CD8-positive, alpha-beta memory T cell (primary cell): ENCODE measurements at regions of chr1 and their contacts with region 1.

Region 1: GRCh38 chr1:150186789-150187559 is 37.3 kb downstream of the PLEKHO1 start:
- DNase-seq: peak in 2 of 5 donors; percentile 45 to 59
- H3K4me3 ChIP-seq: no peak overlapping the region
- H3K4me3 Mint-ChIP-seq: peak overlapping the region in 5 of 7 donors; percentile 4 to 62 (median 33)
- H3K27ac ChIP-seq: no peak overlapping the region
- H3K27ac Mint-ChIP-seq: peak overlapping the region in 6 of 8 donors; percentile 35 to 72 (median 62)
- H3K4me1 ChIP-seq: no peaks in the 10 kb centered on the region
- H3K4me1 Mint-ChIP-seq: peaks cover 7 to 13% (median 10%) of the 10 kb centered on the region in 3 donors
- H3K27me3 ChIP-seq: no peaks in the 10 kb centered on the region
- H3K27me3 Mint-ChIP-seq: peaks cover 0 to 6% of the 10 kb centered on the region in 2 donors

Region 2: DNA sequence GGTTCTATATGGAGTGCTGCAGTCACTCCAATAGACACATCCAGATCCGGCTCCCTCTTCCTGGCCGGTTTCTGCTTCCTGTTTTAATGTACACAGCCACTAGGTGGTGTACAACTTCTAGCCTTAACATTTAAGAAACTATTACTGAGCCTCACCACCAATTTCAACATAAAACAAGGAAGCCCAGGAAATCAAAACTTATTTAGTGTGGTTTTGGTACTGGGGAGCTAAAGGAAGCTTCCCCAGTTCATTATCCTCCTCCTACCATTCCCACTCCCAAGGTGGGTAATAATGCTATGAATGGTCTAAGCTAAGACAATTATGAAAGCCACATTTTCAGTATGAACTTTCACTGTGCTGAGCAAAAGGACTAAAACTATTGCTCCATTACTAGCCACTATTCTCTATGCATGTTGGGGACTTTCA is 224.8 kb before region 1 on chr1:
- CTCF ChIA-PET with region 1: interaction called, 37 read pairs
- POLR2A ChIA-PET with region 1: interaction called, 4 read pairs
- DNase-seq: peak in 4 of 5 donors; percentile 18 to 59 (median 52)
- H3K4me3 ChIP-seq: no peak overlapping the region
- H3K4me3 Mint-ChIP-seq: peak overlapping the region in 1 of 7 donors; percentile 36
- H3K27ac ChIP-seq: no peak overlapping the region
- H3K27ac Mint-ChIP-seq: peak overlapping the region in 6 of 8 donors; percentile 2 to 87 (median 40)
- H3K4me1 ChIP-seq: no peaks in the 10 kb centered on the region
- H3K4me1 Mint-ChIP-seq: peaks cover 5 to 17% (median 9%) of the 10 kb centered on the region in 3 donors
- H3K27me3 ChIP-seq: no peaks in the 10 kb centered on the region
- H3K27me3 Mint-ChIP-seq: no peaks in the 10 kb centered on the region

Region 3: DNA sequence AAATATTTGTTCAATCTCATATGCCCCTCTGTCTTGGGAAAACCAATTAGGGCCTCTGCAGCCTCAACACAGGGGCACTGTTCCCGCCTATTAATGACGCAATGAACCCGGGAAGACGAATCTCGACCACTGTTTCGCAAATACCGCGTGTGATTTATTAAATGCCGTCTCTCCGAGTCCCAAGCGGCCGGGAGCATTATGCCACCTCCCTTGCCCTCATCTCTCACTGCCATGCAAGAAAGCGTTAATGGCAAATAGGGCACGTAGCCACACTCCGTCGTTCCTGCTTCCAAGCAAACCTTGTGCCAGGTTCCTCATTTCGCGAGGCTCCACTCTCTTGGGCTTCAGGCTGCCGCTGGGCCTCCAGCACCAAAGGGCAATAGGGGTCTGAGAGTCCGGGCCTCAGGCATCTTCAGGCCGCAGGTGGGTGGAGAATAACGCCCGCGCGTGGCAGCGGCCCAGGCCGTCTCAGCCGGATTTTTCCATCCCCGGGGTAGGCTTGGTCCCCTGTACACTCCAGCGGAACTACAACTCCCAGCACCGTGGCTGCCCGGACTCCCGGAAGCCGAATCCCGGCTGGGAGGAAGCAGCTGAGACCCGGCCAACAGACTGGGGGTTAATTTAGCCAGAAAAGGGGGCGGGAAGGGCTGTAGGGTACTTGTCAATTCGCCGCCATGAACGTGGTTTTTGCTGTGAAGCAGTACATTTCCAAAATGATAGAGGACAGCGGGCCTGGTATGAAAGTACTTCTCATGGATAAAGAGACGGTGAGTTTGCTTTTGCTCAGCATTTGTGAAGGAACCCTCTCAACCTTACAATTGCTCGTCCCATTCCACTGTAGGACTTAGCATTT is 119.6 kb before region 1 on chr1 and contains the start of gene VPS45:
- CTCF ChIA-PET with region 1: interaction called, 42 read pairs
- POLR2A ChIA-PET with region 1: interaction called, 15 read pairs
- DNase-seq: peak; percentile 60 to 85 (median 71)
- H3K4me3 ChIP-seq: peak within 1 kb of the TSS; percentile 98
- H3K4me3 Mint-ChIP-seq: peak within 1 kb of the TSS; percentile 95 to 98 (median 96)
- H3K27ac ChIP-seq: peak within 1 kb of the TSS; percentile 89
- H3K27ac Mint-ChIP-seq: peak within 1 kb of the TSS; percentile 93 to 98 (median 94)
- H3K4me1 ChIP-seq: peaks cover 22% of the 10 kb centered on the region
- H3K4me1 Mint-ChIP-seq: peaks cover 33 to 43% (median 39%) of the 10 kb centered on the region in 3 donors
- H3K27me3 ChIP-seq: no peaks in the 10 kb centered on the region
- H3K27me3 Mint-ChIP-seq: no peaks in the 10 kb centered on the region
- total RNA-seq, gene VPS45: 26.3 to 33.6 TPM

Region 4: DNA sequence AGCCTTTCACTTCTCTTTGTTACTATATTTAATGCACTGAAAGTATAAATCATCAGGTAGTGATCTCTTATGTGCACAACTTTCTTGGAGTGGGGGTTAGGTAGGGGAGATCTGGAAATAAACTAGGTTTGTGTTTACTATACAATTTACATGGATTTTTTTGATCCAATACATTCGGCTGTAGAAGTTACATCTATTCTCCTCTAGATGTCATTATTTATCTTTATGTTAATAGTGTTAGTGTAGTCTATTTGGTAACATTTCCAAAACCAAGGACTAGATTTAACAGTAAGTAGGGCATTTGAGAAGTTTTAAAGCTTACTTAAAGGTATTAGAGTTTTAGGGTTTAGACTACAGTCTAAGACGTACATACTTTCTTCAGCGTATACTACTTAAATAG is 114.0 kb before region 1 on chr1:
- CTCF ChIA-PET with region 1: interaction called, 42 read pairs
- POLR2A ChIA-PET with region 1: interaction called, 15 read pairs
- DNase-seq: peak in 2 of 5 donors; percentile 28 to 38
- H3K4me3 ChIP-seq: no peak overlapping the region
- H3K4me3 Mint-ChIP-seq: peak overlapping the region in 1 of 7 donors; percentile 42
- H3K27ac ChIP-seq: no peak overlapping the region
- H3K27ac Mint-ChIP-seq: peak overlapping the region in 3 of 8 donors; percentile 34 to 58 (median 56)
- H3K4me1 ChIP-seq: peaks cover 11% of the 10 kb centered on the region
- H3K4me1 Mint-ChIP-seq: peaks cover 28 to 53% (median 50%) of the 10 kb centered on the region in 3 donors
- H3K27me3 ChIP-seq: no peaks in the 10 kb centered on the region
- H3K27me3 Mint-ChIP-seq: no peaks in the 10 kb centered on the region

Region 5: DNA sequence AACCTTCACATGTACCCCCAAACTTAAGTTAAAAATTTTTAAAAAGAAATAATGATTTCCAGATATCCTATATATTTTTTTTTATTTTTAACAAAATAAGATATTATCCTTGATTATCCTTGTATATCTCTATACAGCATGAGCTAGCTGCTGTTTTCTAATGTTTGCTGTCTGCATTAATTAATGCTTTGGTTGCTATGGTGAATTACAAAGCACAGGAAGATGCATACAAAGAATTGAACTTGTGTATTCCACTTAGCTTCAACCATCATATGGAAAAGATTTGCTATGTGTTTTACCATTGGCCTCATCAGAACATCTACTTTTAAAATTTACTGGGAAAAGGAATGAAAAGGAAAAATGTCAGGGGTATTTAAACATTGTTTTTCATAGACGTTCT is 84.0 kb before region 1 on chr1:
- CTCF ChIA-PET with region 1: no interaction called
- POLR2A ChIA-PET with region 1: no interaction called
- DNase-seq: no peak
- H3K4me3 ChIP-seq: no peak overlapping the region
- H3K4me3 Mint-ChIP-seq: no peak overlapping the region
- H3K27ac ChIP-seq: no peak overlapping the region
- H3K27ac Mint-ChIP-seq: peak overlapping the region in 6 of 8 donors; percentile 18 to 88 (median 71)
- H3K4me1 ChIP-seq: peaks cover 31% of the 10 kb centered on the region
- H3K4me1 Mint-ChIP-seq: peaks cover 47 to 59% (median 57%) of the 10 kb centered on the region in 3 donors
- H3K27me3 ChIP-seq: no peaks in the 10 kb centered on the region
- H3K27me3 Mint-ChIP-seq: no peaks in the 10 kb centered on the region

Region 6: GRCh38 chr1:150162862-150163706 is 23.9 kb before region 1 on chr1:
- CTCF ChIA-PET with region 1: interaction called, 15 read pairs
- POLR2A ChIA-PET with region 1: no interaction called
- DNase-seq: no peak
- H3K4me3 ChIP-seq: no peak overlapping the region
- H3K4me3 Mint-ChIP-seq: peak overlapping the region in 1 of 7 donors; percentile 58
- H3K27ac ChIP-seq: peak overlapping the region; percentile 85
- H3K27ac Mint-ChIP-seq: peak overlapping the region in 4 of 8 donors; percentile 4 to 78 (median 56)
- H3K4me1 ChIP-seq: peaks cover 42% of the 10 kb centered on the region
- H3K4me1 Mint-ChIP-seq: peaks cover 24 to 55% (median 38%) of the 10 kb centered on the region in 3 donors
- H3K27me3 ChIP-seq: no peaks in the 10 kb centered on the region
- H3K27me3 Mint-ChIP-seq: peaks cover 0 to 1% of the 10 kb centered on the region in 2 donors